Naive thymus-derived CD4-positive, alpha-beta T cell (primary cell): ENCODE measurements at regions of chr16 and their contacts with region 1.

Region 1: DNA sequence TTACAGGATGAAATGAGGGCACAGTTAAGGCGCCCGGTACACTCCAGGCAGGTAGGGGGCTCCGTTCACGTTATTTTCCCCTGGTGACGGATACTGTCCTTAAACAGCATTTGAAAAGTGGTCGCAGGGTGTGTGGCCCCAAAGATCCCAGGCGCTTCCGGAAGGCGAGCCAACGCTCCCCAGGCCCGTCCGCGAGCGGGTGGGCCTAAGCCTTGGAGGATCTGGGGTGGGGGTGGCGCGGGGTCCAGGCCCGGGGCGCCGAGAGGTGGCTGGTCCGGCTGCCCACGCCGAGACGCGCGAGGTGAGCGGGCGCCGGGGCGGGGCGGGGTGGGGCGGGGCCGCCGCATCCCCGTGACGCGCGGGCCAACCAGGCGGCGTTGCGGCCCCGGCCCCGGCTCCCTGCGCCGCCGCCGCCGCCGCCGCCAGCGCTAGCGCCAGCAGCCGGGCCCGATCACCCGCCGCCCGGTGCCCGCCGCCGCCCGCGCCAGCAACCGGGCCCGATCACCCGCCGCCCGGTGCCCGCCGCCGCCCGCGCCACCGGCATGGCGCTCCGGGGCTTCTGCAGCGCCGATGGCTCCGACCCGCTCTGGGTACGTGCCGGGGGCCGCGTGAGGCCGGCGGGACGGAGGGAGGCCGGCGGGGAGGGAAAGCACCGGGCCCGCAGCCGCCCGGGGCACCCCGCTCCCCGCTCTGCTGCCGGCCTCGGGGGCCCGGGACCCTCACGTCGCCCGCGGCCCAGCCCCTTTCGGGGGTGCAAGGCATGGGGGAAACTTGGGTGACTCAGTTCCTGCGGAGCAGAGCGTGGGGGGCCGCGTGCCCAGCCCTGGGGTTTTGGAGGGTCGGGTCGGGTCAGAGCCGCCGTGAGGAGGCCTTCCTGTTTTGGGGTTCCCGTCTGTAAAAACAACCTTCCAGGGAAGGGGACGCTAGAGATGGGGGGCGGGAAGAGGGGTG is at the start of gene ABCC1:
- DNase-seq: peak; percentile 21 to 69 (median 55)
- ATAC-seq: peak; percentile 80
- H3K4me3 ChIP-seq: peak within 1 kb of the TSS; percentile 83
- H3K4me3 Mint-ChIP-seq: peak within 1 kb of the TSS; percentile 91 to 100 (median 97)
- H3K27ac ChIP-seq: peak within 1 kb of the TSS; percentile 99
- H3K27ac Mint-ChIP-seq: peak within 1 kb of the TSS; percentile 93 to 99 (median 98)
- H3K4me1 ChIP-seq: peaks cover 11 to 15% of the 10 kb centered on the region in 2 donors
- H3K4me1 Mint-ChIP-seq: peaks cover 31 to 47% (median 39%) of the 10 kb centered on the region in 7 donors
- H3K27me3 ChIP-seq: no peaks in the 10 kb centered on the region
- H3K27me3 Mint-ChIP-seq: no peaks in the 10 kb centered on the region
- total RNA-seq, gene ABCC1: 57.3 to 95.8 (median 64.1) TPM

Region 2: DNA sequence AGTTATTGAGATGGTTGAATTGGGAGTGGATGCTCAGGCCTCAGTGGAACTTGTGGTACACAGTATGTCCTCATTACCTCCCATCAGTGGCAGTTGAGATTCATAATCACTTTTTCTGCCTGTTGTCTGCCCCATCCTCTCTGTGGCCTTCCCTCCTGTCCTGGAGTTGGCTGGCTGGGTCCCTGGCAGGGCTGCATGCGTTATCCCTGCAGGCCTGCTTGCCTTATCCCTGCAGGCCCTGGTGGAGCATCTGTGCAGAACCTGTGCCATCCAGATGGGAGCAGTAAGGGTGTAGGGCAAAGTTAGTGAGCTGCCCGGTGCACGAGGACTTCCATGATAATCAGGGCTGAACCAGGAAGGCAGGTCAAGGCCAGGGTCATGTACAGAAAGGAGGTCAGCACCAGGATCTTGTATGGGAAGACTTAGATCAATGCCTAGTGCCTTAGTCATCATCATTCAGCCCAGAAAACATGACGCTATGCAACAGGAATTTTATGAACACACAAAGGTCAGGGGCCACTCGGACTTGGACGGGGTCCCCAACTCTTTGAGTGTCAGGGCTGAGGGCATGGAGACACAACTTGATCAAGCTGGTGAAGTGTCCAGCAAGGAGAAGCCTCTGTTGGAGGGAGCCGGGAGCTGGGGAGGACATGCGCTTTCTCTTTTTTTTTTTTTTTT is 47.1 kb after region 1 on chr16:
- CTCF ChIA-PET with region 1: no interaction called
- POLR2A ChIA-PET with region 1: no interaction called
- intact Hi-C with region 1: loop called (anchors 5 to 10 kb)
- DNase-seq: no peak
- ATAC-seq: no peak
- H3K4me3 ChIP-seq: no peak overlapping the region
- H3K4me3 Mint-ChIP-seq: no peak overlapping the region
- H3K27ac ChIP-seq: no peak overlapping the region
- H3K27ac Mint-ChIP-seq: peak overlapping the region in 2 of 9 donors; percentile 36 to 52
- H3K4me1 ChIP-seq: peaks cover 4 to 6% of the 10 kb centered on the region in 2 donors
- H3K4me1 Mint-ChIP-seq: peaks cover 29 to 56% (median 45%) of the 10 kb centered on the region in 7 donors
- H3K27me3 ChIP-seq: no peaks in the 10 kb centered on the region
- H3K27me3 Mint-ChIP-seq: no peaks in the 10 kb centered on the region

Region 3: DNA sequence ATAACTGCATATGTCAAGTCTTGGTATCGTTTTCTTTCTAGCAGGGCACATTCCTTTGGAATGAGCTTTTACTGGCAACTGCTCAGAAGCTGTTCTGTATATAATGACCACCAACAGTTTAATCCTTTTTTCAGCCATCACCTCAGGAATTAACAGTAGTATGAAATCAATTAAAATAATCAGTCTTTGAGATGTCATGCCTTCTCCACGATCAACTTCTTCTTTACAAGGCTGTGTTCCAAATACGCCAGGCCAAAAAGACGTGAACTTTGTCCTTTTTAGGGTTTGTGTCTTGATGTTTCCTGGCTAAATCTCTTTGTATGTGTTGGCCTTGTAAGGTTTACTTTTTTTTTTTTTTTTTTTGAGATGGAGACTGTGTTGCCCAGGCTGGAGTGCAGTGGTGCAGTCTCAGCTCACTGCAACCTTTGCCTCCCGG is 54.8 kb after region 1 on chr16:
- CTCF ChIA-PET with region 1: no interaction called
- POLR2A ChIA-PET with region 1: no interaction called
- intact Hi-C with region 1: loop called (anchors 5 to 10 kb)
- DNase-seq: no peak
- ATAC-seq: no peak
- H3K4me3 ChIP-seq: no peak overlapping the region
- H3K4me3 Mint-ChIP-seq: no peak overlapping the region
- H3K27ac ChIP-seq: no peak overlapping the region
- H3K27ac Mint-ChIP-seq: peak overlapping the region in 2 of 9 donors; percentile 34 to 47
- H3K4me1 ChIP-seq: peaks cover 0 to 2% of the 10 kb centered on the region in 2 donors
- H3K4me1 Mint-ChIP-seq: peaks cover 28 to 53% (median 36%) of the 10 kb centered on the region in 7 donors
- H3K27me3 ChIP-seq: no peaks in the 10 kb centered on the region
- H3K27me3 Mint-ChIP-seq: no peaks in the 10 kb centered on the region

Region 4: DNA sequence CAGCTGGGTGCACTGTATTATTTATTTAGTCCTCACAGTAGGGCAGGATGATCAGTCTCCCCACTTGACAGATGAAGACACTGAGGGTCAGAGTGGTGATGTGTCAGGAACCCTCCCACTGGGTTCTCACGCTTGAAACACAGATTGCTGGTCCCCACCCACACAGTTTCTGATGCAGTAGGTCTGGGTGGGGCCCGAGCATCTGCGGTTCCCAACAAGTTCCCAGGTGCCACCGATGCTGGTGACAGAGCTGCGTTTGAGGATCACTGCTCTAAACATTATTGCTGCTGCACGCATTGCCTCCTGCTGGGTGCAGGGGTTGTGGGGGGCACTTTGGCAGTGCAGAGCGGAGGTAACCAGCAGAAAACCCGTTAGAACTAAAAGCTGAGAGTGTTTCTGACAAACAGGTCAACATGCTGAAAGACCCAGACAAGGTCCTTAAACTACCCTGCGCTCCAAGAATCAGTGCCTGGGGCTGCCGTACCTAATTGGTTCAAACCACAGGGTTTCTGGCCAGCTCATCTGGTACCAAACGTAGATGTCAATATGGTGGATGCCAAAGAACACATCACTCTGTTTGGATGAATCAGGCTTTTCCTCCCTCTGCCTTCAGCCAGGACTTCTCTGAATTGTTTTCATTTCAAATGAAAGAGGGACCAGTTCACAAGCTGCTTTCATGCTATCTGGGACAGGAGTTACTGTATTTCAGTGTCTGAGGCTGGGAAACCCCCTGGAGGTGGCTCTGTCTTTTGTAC is 75.9 kb after region 1 on chr16:
- CTCF ChIA-PET with region 1: no interaction called
- POLR2A ChIA-PET with region 1: interaction called, 3 read pairs
- intact Hi-C with region 1: loop called in 1 of 2 experiments (anchors 5 kb)
- DNase-seq: peak in 3 of 9 donors; percentile 19 to 44 (median 41)
- ATAC-seq: peak; percentile 81
- H3K4me3 ChIP-seq: no peak overlapping the region
- H3K4me3 Mint-ChIP-seq: peak overlapping the region in 1 of 10 donors; percentile 66
- H3K27ac ChIP-seq: peak overlapping the region; percentile 16
- H3K27ac Mint-ChIP-seq: peak overlapping the region; percentile 51 to 85 (median 74)
- H3K4me1 ChIP-seq: peaks cover 9 to 14% of the 10 kb centered on the region in 2 donors
- H3K4me1 Mint-ChIP-seq: peaks cover 14 to 46% (median 19%) of the 10 kb centered on the region in 7 donors
- H3K27me3 ChIP-seq: no peaks in the 10 kb centered on the region
- H3K27me3 Mint-ChIP-seq: no peaks in the 10 kb centered on the region

Region 5: DNA sequence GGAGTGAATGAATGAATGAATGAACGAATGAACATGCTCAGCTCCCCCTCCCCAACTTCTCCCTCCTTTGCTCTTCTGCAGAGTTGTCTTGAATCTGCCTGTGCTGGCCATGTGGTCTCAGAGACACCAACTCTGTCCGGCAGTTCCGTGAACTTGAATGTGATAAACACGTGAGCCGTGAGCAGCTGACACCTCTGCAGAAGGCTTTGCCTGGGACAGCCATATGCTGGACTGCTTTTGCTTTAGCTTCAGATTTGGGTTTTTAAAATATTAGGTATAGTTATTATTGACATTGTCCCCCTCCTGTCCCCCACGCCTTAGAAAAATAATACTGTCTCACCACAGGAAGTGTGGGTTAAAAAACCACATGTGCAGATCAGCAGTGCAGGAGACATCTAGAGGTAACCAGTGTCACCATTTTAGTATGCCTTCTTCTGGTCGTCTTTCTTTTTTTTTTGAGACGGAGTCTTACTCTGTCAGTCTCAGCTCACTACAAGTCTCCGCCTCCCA is 83.8 kb after region 1 on chr16:
- CTCF ChIA-PET with region 1: interaction called, 3 read pairs
- POLR2A ChIA-PET with region 1: interaction called, 3 read pairs
- intact Hi-C with region 1: loop called (anchors 1 to 5 kb)
- DNase-seq: peak in 7 of 9 donors; percentile 14 to 45 (median 25)
- ATAC-seq: peak; percentile 83
- H3K4me3 ChIP-seq: no peak overlapping the region
- H3K4me3 Mint-ChIP-seq: peak overlapping the region in 8 of 10 donors; percentile 8 to 42 (median 35)
- H3K27ac ChIP-seq: peak overlapping the region; percentile 3
- H3K27ac Mint-ChIP-seq: peak overlapping the region; percentile 5 to 92 (median 77)
- H3K4me1 ChIP-seq: peaks cover 9 to 17% of the 10 kb centered on the region in 2 donors
- H3K4me1 Mint-ChIP-seq: peaks cover 7 to 28% (median 26%) of the 10 kb centered on the region in 7 donors
- H3K27me3 ChIP-seq: no peaks in the 10 kb centered on the region
- H3K27me3 Mint-ChIP-seq: no peaks in the 10 kb centered on the region